ENCODE measurements at regions of chr16 and their contacts with region 1.

Region 1: DNA sequence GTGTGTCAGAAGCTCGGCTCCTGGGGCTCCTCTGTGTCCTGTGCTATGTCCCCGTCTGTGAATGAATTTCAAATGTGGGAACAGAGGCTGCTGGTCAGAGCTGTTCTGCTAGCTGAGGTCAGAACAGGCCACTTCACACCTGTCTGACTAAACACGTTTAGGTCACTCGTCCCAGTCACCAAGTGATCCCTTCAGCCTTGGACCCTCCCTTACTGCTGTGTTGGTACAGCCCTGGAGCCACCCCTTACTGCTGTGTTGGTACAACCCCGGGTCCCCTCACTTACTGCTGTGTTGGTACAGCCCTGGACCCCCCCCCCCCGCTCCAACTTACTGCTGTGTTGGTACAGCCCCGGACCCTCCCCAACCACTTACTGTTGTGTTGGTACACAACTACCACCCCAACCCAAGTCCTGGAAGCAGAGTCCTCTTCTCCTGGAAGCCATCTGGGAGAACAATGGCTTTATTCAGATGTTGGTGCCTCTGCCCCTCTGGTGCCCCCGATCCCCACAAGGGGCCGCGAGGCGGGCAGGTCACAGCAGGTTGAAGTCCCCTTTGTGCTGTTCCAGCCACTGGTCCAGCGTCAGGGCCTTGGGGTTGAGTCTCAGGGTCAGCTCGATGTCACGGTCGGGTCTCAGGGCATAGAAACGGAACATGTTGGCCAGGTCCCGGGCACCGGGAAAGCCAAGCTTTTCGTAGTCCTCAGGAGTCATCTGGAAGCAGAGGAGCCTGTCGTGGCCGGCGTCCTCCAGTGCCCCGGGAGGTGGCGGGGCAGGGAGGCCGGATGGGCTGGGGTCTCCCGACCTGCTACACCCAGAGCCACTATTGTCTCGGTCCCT is 13.0 kb downstream of the NMRAL1 start:
- DNase-seq: no peak
- ATAC-seq: no peak
- H3K4me3 ChIP-seq: no peak overlapping the region
- H3K27ac ChIP-seq: no peak overlapping the region
- H3K4me1 ChIP-seq: peaks cover 19% of the 10 kb centered on the region
- H3K27me3 ChIP-seq: no peaks in the 10 kb centered on the region
- CTCF ChIP-seq: no peak
- POLR2A ChIP-seq: no peak
- RAD21 ChIP-seq: no peak

Region 2: GRCh38 chr16:2777231-2777902 is 1684.1 kb before region 1 on chr16 and contains the start of gene ELOB:
- CTCF ChIA-PET with region 1: no interaction called
- POLR2A ChIA-PET with region 1: no interaction called
- dilution Hi-C with region 1: no loop called
- in situ Hi-C with region 1: no loop called
- intact Hi-C with region 1: no loop called
- DNase-seq: peak; percentile 73
- ATAC-seq: peak; percentile 93
- H3K4me3 ChIP-seq: peak within 1 kb of the TSS; percentile 96
- H3K27ac ChIP-seq: peak within 1 kb of the TSS; percentile 100
- H3K4me1 ChIP-seq: peaks cover 12% of the 10 kb centered on the region
- H3K27me3 ChIP-seq: no peaks in the 10 kb centered on the region; the same call in 1 of the 2 replicates
- CTCF ChIP-seq: no peak
- POLR2A ChIP-seq: peak; percentile 87
- RAD21 ChIP-seq: no peak
- total RNA-seq, gene ELOB: 225 and 5,859 TPM in 2 replicates

Region 3: DNA sequence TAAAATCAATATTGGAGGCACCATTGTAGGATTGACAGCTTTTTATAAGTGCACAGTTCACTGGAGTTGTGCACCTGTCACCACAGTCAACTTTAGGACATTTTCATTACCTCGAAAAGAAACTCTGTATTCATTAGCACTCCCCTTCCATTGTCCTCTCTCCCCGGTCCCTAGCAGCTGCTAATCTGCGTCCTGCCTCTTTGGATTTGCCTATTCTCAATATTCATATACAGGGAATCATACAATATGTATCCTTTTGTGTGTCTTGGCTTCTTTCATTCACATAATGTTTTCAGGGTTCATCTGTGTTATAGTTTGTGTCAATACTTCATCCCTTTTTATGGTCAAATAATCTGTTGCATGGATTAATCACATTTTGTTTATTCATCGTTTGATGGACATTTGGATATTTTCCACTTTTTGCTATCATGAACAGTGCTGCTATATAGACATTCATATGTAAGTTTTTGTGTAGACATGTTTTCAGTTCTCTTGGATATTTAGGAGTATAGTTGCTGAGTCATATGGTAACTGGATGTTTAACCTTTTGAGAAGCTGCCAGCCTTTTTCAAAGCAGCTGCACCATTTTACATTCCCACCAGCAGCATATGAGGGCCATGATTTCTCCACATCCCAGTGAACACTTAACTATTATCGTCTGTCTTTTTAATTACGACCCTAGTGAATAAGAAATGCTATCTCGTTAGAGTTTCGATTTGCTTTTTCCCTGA is 26.0 kb before region 1 on chr16:
- CTCF ChIA-PET with region 1: no interaction called
- POLR2A ChIA-PET with region 1: interaction called, 14 read pairs
- dilution Hi-C with region 1: no loop called
- in situ Hi-C with region 1: no loop called
- intact Hi-C with region 1: no loop called
- DNase-seq: peak; percentile 78
- ATAC-seq: peak; percentile 89
- H3K4me3 ChIP-seq: no peak overlapping the region
- H3K27ac ChIP-seq: peak overlapping the region; percentile 93; the same call in 1 of the 2 replicates
- H3K4me1 ChIP-seq: peaks cover 5% of the 10 kb centered on the region
- H3K27me3 ChIP-seq: no peaks in the 10 kb centered on the region
- CTCF ChIP-seq: no peak
- POLR2A ChIP-seq: no peak
- RAD21 ChIP-seq: no peak

Measured in IMR-90 (cell line).